Left cardiac atrium (tissue), 4 donors: ENCODE measurements at regions of chr2 and their contacts with region 1.

Region 1: DNA sequence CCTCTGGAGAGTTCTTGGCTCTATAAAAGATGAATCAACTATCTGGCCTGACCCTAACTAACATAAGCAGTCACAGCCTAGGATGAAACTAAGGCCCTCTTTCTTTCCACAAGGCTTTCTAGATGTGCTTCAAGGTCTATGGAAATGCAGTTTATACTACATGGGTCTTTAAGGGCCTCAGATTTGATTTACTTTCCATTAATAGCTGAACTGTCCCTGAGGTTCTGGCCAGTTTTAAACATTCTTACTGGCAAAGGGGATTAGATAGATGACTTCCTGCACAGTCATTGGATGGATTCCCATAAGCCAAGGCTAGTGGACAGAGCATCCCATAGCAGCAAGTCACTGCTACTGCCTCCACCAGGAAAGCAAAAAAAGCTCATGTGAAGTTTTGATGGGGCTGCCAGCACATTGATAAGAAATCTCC is 38.1 kb upstream of the LCLAT1 start:
- DNase-seq: no peak
- ATAC-seq: peak in 1 of 2 donors; percentile 19

Region 2: DNA sequence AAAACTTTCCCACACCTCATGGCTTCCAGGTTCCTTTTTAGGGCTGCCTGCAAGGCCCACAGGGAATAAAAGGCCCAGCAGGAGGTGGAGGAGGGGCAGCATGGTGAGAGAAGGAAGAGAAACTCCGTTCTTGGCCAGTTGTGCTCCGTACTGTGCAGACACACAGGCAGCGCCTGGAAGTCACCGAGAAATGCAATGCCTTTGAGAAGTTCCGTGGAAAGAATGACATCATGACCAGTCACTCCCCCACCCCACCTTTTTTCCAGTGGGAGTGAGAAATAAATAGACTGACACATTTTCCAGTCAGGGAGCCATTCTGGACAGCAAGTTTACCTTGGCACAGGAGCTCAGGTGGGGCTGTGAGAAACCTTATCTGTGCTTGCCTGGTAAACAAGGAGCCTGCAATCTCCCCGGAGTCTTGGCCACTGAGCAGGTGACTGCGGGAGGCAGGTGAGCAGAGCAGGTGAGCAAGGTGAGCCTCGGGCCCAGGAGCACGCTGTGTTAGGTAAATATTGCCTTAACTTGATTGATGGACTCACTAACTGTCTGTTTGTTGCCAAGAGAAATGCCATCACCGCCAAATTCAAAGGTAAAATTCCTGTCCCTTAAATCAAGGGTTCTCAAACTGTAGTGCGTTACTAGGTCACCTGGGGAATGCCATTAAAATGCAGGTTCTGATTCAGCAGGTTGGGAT is 191.2 kb before region 1 on chr2:
- intact Hi-C with region 1: no loop called
- DNase-seq: peak; percentile 62
- ATAC-seq: peak in 1 of 2 donors; percentile 74

Region 3: DNA sequence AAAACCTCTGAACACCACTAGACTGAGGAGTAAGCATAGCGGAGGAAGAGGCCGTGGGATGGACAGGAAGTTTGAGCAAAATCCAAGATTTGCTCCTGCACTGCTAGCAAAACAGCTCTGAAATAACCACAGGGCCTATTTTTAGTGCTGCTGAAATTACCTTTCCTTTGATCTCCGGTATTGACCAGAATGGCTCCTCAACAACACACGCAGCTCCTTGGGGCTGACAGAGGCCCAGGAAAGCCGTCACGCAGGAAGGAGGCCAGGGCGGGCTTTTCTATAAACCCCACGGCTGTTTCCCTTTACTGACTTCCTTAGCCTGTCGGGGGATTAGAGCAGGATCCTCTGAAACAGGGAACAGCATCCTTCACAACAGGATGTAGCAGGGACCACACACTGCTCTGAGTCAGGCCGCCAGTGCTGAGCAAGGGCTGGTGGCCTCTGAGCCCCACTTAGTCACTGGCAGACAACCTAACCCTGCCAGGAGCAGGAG is 42.7 kb before region 1 on chr2:
- intact Hi-C with region 1: loop called in 1 of 2 experiments (anchors 5 kb)
- DNase-seq: no peak
- ATAC-seq: peak in 1 of 2 donors; percentile 26